ENCODE measurements at regions of chr6 and their contacts with region 1.

Region 1: DNA sequence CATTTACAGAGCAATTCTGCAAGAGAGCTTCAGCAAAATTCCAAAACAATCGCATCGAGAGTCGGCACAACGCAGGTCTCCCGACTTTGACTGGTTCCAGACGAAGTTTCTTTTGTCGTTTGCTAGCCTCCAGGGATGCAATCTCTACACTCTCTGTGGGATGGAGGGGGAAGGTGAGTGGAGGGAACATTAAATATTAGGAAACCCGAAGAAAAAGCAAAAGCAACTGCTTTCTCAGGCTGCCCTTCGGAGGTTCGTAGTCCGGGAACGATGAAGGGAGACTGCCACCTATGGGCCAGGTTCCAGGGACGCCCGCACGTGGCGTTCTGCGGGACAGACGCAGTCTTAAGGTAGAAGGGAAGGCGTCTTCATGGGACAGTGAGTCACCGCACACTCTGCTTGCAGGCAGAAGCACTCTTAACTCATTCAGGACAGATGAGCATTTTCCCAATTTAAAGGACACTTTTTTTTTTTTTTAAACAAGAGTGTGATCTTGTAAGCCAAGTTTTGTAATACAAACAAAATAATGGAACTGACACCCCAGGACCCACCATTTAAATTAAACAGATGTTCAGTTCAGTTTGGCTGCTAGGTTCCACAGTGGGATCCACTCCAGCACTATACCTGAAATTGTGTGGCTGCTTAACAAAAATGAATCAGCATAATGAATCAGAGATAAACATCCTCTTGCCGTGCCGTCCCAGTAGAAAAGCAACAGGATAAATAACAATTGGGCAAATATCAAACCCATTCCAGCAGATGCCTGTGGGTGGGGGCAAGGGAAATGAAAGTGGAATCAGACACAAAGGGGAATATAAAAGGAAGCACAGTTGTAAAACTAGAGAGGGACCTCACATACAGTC is 65.8 kb upstream of the ARMC2 start:
- DNase-seq: peak; percentile 92
- H3K4me3 ChIP-seq: peak overlapping the region; percentile 51 to 55
- H3K27ac ChIP-seq: peak overlapping the region in 1 of 2 donors; percentile 64
- H3K4me1 ChIP-seq: no peaks in the 10 kb centered on the region
- H3K27me3 ChIP-seq: no peaks in the 10 kb centered on the region
- CTCF ChIP-seq: peak; percentile 62 to 75 (median 74)
- POLR2A ChIP-seq: no peak

Region 2: DNA sequence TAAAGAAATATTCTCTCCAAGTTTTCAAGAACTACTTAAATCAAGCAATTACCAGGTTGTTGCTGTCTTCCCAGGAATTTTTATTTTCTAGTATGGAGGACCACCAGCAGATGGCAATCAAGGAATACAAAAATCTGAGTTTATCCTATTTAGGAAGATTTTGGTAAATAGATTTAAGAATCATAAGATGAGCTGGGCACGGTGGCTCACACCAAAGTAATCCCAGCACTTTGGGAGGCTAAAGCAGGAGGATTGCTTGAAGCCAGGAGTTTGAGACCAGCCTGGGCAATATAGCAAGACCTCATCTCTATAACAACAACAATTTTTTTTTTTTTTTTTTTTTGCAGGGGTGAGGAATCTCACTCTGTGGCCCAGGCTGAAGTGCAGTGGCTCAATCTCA is 805.1 kb before region 1 on chr6:
- intact Hi-C with region 1: loop called (anchors 10 kb)
- DNase-seq: no peak
- H3K4me3 ChIP-seq: no peak overlapping the region
- H3K27ac ChIP-seq: no peak overlapping the region
- H3K4me1 ChIP-seq: peaks cover 16% of the 10 kb centered on the region
- H3K27me3 ChIP-seq: no peaks in the 10 kb centered on the region
- CTCF ChIP-seq: peak; percentile 45 to 59 (median 49)
- POLR2A ChIP-seq: no peak

Region 3: GRCh38 chr6:108622641-108623298 is 159.6 kb before region 1 on chr6:
- intact Hi-C with region 1: no loop called
- DNase-seq: no peak
- H3K4me3 ChIP-seq: no peak overlapping the region
- H3K27ac ChIP-seq: no peak overlapping the region
- H3K4me1 ChIP-seq: peaks cover 32% of the 10 kb centered on the region
- H3K27me3 ChIP-seq: no peaks in the 10 kb centered on the region
- CTCF ChIP-seq: no peak
- POLR2A ChIP-seq: no peak

Region 4: DNA sequence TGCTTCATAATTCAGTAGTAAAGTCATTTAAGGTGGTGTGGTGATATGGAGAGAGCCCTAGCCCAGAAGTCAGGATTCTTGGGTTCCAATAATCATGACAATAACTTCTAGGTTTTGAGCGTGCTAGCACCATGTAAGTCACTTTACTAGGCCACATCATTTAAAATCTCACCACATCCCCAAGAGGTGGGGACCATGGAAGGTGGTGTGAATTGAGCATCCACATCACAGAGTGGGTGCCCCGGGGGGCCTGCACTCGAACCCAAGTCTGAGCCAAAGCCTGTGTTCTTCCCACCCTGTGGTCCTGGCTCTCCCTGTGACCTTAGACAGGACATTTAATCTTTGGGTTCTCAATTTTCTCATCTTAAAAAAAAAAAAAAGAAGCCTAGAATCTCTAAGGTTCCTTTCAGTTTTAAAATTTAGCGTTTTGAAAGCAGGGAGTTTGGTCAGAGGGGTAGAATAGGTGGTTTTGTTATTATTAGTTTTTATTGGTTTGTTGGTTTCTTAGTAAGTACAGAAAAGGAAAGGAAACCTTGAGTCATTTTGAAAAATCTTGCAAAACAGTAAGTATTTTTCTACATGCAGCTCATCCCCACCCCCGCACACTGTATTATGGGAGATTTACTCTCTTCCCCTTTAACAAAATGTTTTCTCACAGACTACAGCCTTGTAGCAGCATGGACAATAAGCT is 92.2 kb after region 1 on chr6:
- intact Hi-C with region 1: no loop called
- DNase-seq: no peak
- H3K4me3 ChIP-seq: no peak overlapping the region
- H3K27ac ChIP-seq: peak overlapping the region in 1 of 2 donors; percentile 68
- H3K4me1 ChIP-seq: no peaks in the 10 kb centered on the region
- H3K27me3 ChIP-seq: no peaks in the 10 kb centered on the region
- CTCF ChIP-seq: no peak
- POLR2A ChIP-seq: no peak

Region 5: GRCh38 chr6:108941859-108942258 is 159.4 kb after region 1 on chr6:
- intact Hi-C with region 1: no loop called
- DNase-seq: no peak
- H3K4me3 ChIP-seq: no peak overlapping the region
- H3K27ac ChIP-seq: no peak overlapping the region
- H3K4me1 ChIP-seq: peaks cover 34% of the 10 kb centered on the region
- H3K27me3 ChIP-seq: no peaks in the 10 kb centered on the region
- CTCF ChIP-seq: no peak
- POLR2A ChIP-seq: no peak